ENCODE measurements at regions of chr9 and their contacts with region 1.

Region 1: GRCh38 chr9:113657703-113658544 is 194.4 kb downstream of the RGS3 start:
- DNase-seq: peak; percentile 89
- ATAC-seq: peak; percentile 95
- H3K4me3 Mint-ChIP-seq: no peak overlapping the region
- H3K27ac Mint-ChIP-seq: no peak overlapping the region
- H3K4me1 Mint-ChIP-seq: peaks cover 7% of the 10 kb centered on the region
- H3K27me3 Mint-ChIP-seq: peaks cover 20% of the 10 kb centered on the region

Region 2: DNA sequence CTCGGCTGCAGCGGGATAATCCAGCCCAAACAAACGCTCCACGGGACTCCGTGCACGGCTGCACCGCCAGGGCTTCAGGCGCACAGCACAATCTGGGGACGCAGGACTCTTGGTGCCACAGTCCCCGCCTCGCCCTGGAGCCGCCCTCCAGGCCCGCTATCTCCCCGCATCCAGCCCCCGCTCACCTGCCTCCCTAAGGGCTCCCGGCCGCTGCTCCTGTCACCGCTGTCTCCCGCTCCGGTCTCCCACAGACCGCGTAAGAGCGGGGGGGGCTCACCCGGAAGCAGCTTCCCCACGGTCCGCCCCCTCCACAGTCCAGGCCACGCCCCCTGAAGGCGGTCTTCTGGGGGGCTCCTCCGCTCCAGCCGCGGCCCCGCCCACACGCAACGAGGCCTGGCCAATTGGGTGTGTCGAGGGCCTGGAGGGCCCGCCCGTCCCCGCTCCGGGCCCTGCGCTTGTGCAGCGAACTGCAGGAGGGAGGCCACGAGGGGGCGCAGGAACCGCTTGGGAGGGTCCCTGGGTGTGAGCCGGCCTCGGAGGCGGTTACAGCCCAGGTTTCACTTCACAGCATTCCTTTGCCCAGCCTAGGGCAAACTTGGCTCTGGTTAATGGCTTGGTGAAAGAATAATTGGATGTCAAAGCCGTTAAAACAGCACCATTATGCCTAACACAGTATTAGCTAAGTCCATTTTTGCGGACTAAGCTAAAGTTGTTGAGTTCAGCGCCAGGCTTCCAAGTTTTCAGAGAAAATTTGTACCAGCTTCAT is 256.7 kb before region 1 on chr9 and contains the start of gene ALAD:
- CTCF ChIA-PET with region 1: interaction called, 19 read pairs
- POLR2A ChIA-PET with region 1: no interaction called
- intact Hi-C with region 1: loop called (anchors 1 to 2 kb)
- DNase-seq: peak; percentile 100
- ATAC-seq: peak; percentile 99
- H3K4me3 Mint-ChIP-seq: peak within 1 kb of the TSS; percentile 86
- H3K27ac Mint-ChIP-seq: peak within 1 kb of the TSS; percentile 84
- H3K4me1 Mint-ChIP-seq: peaks cover 19% of the 10 kb centered on the region
- H3K27me3 Mint-ChIP-seq: no peaks in the 10 kb centered on the region
- total RNA-seq, gene ALAD: 20.2 to 30.1 TPM

Region 3: DNA sequence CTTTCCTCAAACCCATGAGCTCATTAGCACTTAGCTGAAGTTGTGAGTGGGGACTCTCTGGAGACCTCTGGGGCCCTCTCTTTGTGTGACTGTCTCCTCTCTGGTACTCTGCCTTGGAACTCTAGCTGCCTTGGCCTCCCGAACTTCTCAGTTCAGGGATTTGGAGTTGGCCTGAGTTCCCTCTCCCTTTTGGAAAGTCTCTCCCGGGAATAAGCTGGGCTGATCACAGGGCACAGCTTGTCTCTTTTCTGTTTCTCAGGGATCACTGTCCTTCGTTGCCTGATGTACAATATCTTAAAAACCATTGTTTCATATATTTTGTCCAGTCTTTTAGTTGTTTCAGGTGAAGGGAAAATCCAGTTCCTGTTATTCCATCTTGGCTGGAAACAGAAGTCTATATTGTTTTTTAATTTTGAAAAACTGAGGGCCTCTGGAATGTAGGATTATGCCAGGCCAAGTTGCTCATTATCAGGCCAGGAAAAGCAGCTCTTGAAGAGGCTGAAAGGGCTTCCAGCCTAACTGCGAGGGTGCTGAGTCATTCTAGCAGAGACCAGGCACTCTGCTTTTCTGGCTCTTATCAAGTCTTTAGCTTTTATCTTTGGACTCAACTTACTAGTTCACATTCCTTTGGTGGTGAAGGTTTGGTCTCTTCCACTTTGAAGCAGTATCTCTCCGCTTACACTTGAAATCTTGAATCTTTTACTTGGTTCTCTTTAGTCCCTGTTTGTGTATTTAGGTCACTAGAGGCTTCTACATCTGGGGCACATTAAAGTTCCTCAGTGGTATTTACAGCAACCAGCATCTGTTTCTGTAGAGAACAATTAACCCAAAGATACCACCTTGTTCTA is 202.8 kb before region 1 on chr9:
- CTCF ChIA-PET with region 1: interaction called, 11 read pairs
- POLR2A ChIA-PET with region 1: no interaction called
- intact Hi-C with region 1: no loop called
- DNase-seq: peak; percentile 19
- ATAC-seq: peak; percentile 42
- H3K4me3 Mint-ChIP-seq: no peak overlapping the region
- H3K27ac Mint-ChIP-seq: no peak overlapping the region
- H3K4me1 Mint-ChIP-seq: peaks cover 7% of the 10 kb centered on the region
- H3K27me3 Mint-ChIP-seq: no peaks in the 10 kb centered on the region

Region 4: DNA sequence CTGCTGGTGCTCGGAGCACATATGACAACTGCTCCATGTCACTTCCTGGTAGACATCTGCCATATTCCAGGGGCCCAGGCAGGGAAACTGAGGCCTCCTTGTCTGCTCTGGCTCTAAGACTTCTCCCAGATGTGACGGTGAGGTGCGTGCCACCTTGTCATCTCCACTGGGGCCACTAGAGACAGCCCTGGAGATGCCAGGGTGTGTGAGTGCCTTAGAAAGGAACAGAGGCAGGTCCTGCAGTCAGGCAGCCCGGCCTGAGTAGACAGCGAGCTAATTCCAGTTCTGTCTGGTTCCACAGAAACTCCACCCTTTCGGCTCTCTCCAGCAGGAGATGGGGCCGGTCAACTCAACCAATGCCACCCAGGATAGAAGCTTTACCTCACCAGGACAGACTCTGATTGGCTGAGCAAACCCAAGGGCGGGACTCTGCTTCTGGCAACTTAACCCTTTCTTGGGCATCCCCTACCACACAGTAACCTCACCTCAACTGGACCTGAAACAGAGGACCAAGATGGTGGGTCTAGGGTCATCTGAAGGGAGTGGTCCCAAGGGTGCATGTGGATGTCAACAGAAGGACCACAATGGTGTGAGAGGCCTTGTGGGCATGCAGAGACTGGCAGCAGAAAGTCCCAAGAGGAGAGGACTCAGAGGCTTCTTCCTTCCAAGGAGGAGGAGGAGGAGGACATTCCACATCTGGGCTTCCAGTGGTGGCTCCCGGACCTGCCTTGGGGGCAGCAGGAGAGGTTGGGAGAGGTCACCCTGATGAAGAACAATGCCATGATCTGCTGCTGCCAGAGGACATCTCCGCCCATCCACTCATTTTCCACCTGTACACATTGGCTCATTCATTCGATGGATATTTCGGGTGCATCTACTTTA is 116.7 kb before region 1 on chr9:
- CTCF ChIA-PET with region 1: no interaction called
- POLR2A ChIA-PET with region 1: no interaction called
- intact Hi-C with region 1: no loop called
- DNase-seq: no peak
- ATAC-seq: peak; percentile 23
- H3K4me3 Mint-ChIP-seq: no peak overlapping the region
- H3K27ac Mint-ChIP-seq: no peak overlapping the region
- H3K4me1 Mint-ChIP-seq: peaks cover 3% of the 10 kb centered on the region
- H3K27me3 Mint-ChIP-seq: no peaks in the 10 kb centered on the region

Region 5: DNA sequence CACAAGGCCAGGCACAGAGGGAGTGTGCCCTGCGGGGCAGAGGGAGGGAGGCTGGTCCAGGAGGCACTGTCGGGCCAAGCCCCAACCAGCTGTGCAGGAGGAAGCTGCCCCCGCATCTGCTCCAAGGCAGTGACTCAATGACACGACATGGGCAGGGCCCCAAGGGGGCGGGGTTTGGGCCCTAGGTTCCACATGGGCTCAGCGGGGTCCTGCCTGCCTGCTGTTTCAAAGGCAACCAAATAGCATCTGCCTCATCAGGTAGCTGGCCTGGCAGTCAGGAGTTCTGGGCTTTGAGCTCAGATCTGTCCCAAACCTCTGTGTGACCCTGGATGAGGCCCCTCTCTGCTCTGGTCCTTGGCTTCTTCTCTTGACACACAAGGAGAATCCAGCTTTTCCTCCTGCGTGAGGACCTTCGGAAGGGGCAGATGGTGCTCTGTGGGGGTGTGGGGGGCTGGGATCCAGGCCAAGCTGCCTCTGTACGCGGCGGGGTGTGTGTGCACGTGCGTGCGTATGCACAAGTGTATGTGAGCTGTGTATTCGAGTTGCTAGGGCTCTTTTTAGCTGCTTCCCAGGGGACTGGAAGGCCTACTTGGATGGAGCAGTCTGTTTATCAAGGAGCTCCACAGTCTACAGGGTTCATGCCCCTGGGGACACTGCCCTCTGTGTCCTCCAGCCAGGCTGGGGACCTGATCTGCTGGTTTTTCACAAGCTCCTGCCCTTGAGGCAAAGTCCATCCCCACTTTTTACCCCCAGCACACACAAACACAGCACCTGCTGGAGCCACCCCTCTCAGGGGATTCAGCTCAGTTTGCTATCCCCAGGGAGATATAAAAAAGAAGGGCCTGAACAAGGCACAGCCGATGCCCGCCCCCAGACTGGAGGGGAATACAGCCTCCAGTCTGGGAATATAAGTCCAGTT is 55.5 kb before region 1 on chr9:
- CTCF ChIA-PET with region 1: interaction called, 54 read pairs
- POLR2A ChIA-PET with region 1: no interaction called
- intact Hi-C with region 1: no loop called
- DNase-seq: peak; percentile 92
- ATAC-seq: peak; percentile 100
- H3K4me3 Mint-ChIP-seq: no peak overlapping the region
- H3K27ac Mint-ChIP-seq: peak overlapping the region; percentile 78
- H3K4me1 Mint-ChIP-seq: peaks cover 15% of the 10 kb centered on the region
- H3K27me3 Mint-ChIP-seq: no peaks in the 10 kb centered on the region

Region 6: GRCh38 chr9:113632776-113633590 is 24.9 kb before region 1 on chr9:
- CTCF ChIA-PET with region 1: interaction called, 10 read pairs
- POLR2A ChIA-PET with region 1: no interaction called
- intact Hi-C with region 1: no loop called
- DNase-seq: peak; percentile 73
- ATAC-seq: peak; percentile 84
- H3K4me3 Mint-ChIP-seq: no peak overlapping the region
- H3K27ac Mint-ChIP-seq: peak overlapping the region; percentile 61
- H3K4me1 Mint-ChIP-seq: peaks cover 13% of the 10 kb centered on the region
- H3K27me3 Mint-ChIP-seq: peaks cover 9% of the 10 kb centered on the region